Calu3 (cell line): ENCODE measurements at regions of chr10 and their contacts with region 1.

Region 1: DNA sequence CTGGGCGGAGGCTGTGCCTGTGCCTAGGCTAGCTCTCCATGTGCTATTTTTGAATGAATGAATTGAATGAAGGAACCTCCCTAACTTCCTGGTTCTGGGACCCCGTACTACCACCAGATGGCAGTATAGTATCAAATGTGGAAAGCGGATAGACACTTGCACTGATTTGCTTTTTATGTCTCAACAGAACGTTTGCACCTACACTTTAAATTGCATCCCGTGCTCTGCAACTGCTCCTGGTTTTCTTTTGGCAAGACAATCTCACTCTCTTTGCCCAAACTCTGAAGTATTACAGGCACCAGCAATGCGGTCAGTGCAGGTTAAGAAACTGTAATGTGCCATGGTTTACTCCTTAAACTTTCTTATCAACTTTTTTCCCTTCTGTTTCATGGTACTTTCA is 6.5 kb downstream of the FZD8 start:
- DNase-seq: peak; percentile 63
- H3K4me3 Mint-ChIP-seq: no peak overlapping the region
- H3K27ac Mint-ChIP-seq: no peak overlapping the region
- H3K4me1 Mint-ChIP-seq: no peaks in the 10 kb centered on the region
- H3K27me3 Mint-ChIP-seq: no peaks in the 10 kb centered on the region
- CTCF ChIP-seq: peak; percentile 84

Region 2: GRCh38 chr10:35916791-35917190 is 281.2 kb after region 1 on chr10:
- CTCF ChIA-PET with region 1: no interaction called
- intact Hi-C with region 1: loop called (anchors 5 kb)
- DNase-seq: no peak
- H3K4me3 Mint-ChIP-seq: no peak overlapping the region
- H3K27ac Mint-ChIP-seq: no peak overlapping the region
- H3K4me1 Mint-ChIP-seq: no peaks in the 10 kb centered on the region
- H3K27me3 Mint-ChIP-seq: no peaks in the 10 kb centered on the region
- CTCF ChIP-seq: no peak

Region 3: DNA sequence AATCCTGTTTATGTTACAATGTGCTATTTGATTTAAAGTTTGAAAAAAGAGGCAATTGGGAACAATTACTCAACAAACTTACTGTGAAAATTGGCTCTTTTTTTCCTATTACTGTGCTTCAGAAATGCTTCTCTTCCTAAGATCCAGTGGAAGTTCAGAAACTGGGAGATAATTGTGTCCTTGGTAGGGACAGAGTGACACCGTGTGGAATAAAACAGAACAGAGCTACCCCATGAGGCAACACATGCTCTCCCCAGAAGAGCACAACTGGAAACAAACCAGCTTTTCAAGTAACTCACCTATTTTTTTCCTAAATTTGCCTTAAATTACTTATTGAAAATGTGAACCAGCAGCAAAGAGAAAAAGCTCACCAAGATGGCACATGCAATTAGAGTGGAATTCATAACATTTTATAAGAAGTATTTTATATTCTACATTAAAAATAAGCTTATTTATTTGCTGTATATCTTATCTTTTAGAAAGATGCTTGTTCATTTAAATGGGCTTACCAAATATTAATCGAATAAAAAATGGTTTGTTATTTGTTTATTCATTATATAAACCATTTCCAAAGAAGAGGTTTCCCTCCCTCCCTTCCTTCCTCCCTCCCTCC is 1143.8 kb after region 1 on chr10:
- CTCF ChIA-PET with region 1: interaction called, 8 read pairs
- intact Hi-C with region 1: loop called (anchors 1 kb)
- DNase-seq: peak; percentile 19
- H3K4me3 Mint-ChIP-seq: no peak overlapping the region
- H3K27ac Mint-ChIP-seq: no peak overlapping the region
- H3K4me1 Mint-ChIP-seq: no peaks in the 10 kb centered on the region
- H3K27me3 Mint-ChIP-seq: no peaks in the 10 kb centered on the region
- CTCF ChIP-seq: no peak

Region 4: DNA sequence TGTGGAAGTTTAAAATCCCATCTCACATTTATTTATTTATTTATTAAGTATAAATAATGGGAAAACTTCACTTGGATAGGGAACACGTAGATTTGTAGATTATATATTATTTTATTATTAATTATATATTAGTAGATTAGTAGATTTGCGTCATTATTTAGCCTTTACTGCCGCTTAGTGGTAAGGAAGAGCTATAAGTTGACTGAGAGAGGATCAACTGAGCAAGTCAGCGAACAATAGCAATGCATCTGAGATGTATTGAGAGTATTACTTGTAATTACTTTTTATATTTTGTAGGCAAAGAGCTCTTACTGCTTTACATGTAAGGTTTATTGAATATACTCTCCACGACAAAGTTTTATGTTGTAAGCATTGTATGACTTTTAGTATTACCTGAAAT is 1245.3 kb after region 1 on chr10:
- CTCF ChIA-PET with region 1: interaction called, 10 read pairs
- intact Hi-C with region 1: loop called (anchors 1 kb)
- DNase-seq: no peak
- H3K4me3 Mint-ChIP-seq: no peak overlapping the region
- H3K27ac Mint-ChIP-seq: no peak overlapping the region
- H3K4me1 Mint-ChIP-seq: no peaks in the 10 kb centered on the region
- H3K27me3 Mint-ChIP-seq: no peaks in the 10 kb centered on the region
- CTCF ChIP-seq: peak; percentile 45